Dorsolateral prefrontal cortex (tissue), 120 donors: ENCODE measurements at regions of chr18 and their contacts with region 1.

Region 1: GRCh38 chr18:49250816-49251388 is 209.5 kb downstream of the DYM start:
- DNase-seq: no peak
- H3K4me3 ChIP-seq: no peak overlapping the region
- H3K27ac ChIP-seq: peak overlapping the region in 9 of 59 donors; percentile 5 to 66 (median 17)
- H3K27me3 ChIP-seq: no peaks in the 10 kb centered on the region
- CTCF ChIP-seq: peak in 55 of 56 donors; percentile 38 to 77 (median 56)

Region 2: GRCh38 chr18:49335677-49336076 is 84.8 kb after region 1 on chr18:
- intact Hi-C with region 1: no loop called
- DNase-seq: no peak
- H3K4me3 ChIP-seq: no peak overlapping the region
- H3K27ac ChIP-seq: no peak overlapping the region
- H3K27me3 ChIP-seq: no peaks in the 10 kb centered on the region
- CTCF ChIP-seq: peak in 1 of 56 donors; percentile 27

Region 3: GRCh38 chr18:49406863-49407262 is 156.0 kb after region 1 on chr18:
- intact Hi-C with region 1: loop called in 1 of 2 experiments (anchors 5 kb)
- DNase-seq: no peak
- H3K4me3 ChIP-seq: no peak overlapping the region
- H3K27ac ChIP-seq: no peak overlapping the region
- H3K27me3 ChIP-seq: no peaks in the 10 kb centered on the region
- CTCF ChIP-seq: no peak

Region 4: GRCh38 chr18:49412679-49413078 is 161.8 kb after region 1 on chr18:
- intact Hi-C with region 1: loop called (anchors 2 to 5 kb)
- DNase-seq: no peak
- H3K4me3 ChIP-seq: no peak overlapping the region
- H3K27ac ChIP-seq: peak overlapping the region in 20 of 59 donors; percentile 1 to 61 (median 16)
- H3K27me3 ChIP-seq: no peaks in the 10 kb centered on the region
- CTCF ChIP-seq: no peak

Region 5: DNA sequence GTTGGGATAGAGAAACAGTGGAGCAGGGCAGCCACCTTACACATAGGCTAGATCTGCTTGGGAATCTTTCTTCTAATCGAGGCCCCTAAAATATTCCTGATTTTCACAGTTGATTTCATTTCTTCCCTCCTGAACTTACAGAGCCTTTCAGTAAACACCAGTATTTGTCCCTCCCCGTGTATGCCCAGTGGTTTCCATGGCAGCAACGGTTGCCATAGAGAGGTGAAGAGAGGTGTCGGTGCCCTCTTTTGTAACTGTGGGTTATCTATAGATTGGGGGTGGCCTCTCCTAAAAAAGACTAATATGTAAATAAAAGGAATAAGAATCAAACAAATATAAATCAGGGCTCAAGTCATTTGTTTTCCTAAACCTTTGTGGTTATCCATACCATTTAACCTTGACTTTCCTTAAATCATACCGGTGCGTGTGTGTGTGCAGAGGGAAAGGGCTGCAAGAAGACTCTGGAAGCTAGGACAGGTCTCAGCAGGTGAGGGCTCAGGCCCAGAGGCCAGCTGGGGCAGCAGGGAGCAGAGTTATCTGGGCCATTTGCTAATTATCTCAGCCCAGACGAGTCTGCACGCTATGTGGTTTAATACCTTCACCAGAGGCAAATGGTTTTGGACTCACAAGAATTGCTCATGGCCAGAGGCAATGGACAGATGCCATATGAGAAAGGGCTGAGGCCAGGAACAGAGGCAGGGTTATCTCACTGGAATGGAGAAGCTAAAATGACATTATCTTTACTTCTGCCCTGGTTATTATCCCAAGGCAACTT is 346.4 kb after region 1 on chr18:
- intact Hi-C with region 1: no loop called
- DNase-seq: peak in 1 of 10 donors; percentile 76
- H3K4me3 ChIP-seq: no peak overlapping the region
- H3K27ac ChIP-seq: no peak overlapping the region
- H3K27me3 ChIP-seq: peaks cover 0 to 7% (median 0%) of the 10 kb centered on the region in 45 donors
- CTCF ChIP-seq: no peak